ENCODE measurements at regions of chrX and their contacts with region 1.

Region 1: DNA sequence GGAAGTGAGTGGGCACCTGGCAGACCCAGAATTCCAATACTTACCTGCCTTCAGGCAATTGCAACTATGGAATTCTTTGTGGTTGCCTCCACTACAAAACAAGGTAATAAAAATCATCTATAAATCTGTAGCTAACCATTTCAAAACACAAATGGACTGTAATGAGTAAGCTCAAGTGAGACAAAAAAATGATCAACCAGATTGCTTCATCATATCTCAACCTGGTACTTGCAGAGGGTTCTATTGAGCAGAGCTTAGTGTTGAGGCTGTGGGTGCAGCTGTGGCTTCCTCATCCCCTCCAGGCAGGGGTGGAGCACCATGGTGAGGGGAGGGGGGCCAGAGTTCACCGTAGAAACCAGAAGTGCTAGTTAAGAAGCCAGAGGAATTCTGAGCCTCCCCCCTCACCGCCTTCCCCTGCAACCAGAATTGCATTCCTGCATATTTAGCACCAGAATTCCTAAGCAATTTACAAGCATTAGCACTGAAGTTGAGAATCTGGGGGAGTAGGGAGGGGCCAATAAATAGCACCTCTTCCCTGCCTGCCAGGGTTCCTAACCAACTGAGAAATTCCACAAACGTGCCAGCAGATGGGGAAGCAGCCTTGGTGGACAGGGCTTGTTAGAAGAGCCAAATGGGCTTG is 11.5 kb downstream of the CTAG1A start:
- DNase-seq: no peak
- CTCF ChIP-seq: no peak

Region 2: GRCh38 chrX:154748712-154749343 is 152.4 kb after region 1 on chrX:
- in situ Hi-C with region 1: loop called (anchors 25 kb)
- DNase-seq: peak; percentile 45
- CTCF ChIP-seq: peak; percentile 53

Region 3: DNA sequence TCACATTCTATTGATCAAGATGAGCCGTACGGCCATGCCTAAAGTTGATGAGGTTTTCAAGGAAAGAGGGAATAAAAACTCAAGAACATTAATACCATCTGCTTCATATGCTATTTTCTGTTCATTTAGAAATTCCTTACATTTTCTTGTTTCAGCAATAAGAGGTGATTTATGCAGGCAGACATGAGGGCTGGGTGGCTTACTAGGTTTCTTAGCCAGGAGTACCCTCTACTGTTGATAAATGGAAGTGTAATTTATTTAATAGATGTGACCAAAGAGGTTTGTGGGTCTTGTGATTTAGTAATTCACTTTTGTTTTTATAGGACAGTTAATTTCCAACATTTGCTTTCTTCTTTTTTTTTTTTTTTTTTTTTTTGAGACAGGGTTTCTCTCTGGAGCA is 244.4 kb after region 1 on chrX:
- in situ Hi-C with region 1: loop called (anchors 25 kb)
- DNase-seq: peak; percentile 45
- CTCF ChIP-seq: peak; percentile 17

Region 4: DNA sequence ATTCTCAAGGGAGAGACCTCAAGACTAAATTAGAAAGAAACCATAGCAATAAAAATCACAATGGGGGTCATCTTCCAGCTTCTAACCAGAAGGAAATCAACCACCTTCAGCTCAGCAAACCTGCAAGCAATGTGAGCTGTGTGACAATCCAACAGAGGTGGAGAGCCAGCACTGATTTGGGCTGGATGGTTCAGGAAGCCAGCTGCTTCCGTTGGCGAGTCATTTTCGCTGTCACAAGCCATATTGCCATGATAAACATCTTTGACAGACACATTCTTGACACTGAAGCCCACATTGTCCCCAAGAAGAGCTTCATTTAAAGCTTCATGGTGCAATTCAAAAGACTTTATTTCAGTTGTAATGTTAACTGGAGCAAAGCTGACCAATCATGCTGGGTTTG is 312.4 kb after region 1 on chrX:
- in situ Hi-C with region 1: no loop called
- DNase-seq: no peak
- CTCF ChIP-seq: no peak